ENCODE measurements at regions of chr10 and their contacts with region 1.

Region 1: DNA sequence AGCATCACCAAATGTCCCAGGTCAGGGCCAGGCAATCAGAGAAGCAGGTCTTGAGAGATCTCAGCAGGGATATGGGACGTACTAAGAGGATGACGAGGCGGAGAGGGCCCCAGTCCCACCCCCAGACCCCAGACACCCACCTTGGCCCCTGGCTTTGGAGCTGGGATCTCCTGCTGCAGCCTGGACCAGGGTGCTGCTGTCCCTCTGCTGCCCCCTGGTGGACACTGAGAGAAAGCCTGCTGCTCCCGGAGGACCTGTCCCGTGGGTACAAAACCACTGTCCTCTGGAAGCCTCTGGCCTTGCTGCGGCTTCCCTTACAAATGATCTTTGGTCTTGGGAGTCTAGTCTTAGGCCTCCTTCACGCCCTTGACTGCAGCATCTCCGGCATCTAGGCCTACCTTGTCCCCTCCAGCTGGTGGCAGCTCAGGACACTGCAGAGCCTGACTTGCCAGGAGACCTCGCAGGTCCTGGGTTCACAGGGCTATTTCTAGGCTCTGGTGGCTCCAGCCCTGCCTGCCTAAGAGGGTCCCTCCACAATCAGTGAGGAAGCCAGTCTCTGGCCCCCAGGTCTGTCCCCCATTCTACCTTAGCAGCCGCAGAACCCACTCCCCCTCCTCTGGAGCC is 97.1 kb downstream of the RGS10 start:
- DNase-seq: no peak
- ATAC-seq: peak; percentile 89
- H3K4me3 ChIP-seq: no peak overlapping the region
- H3K27ac ChIP-seq: no peak overlapping the region
- H3K4me1 ChIP-seq: peaks cover 14% of the 10 kb centered on the region
- H3K27me3 ChIP-seq: no peaks in the 10 kb centered on the region
- CTCF ChIP-seq: peak; percentile 86 to 92 (median 89)
- EP300 ChIP-seq: no peak
- POLR2A ChIP-seq: no peak
- RAD21 ChIP-seq: peak; percentile 78

Region 2: GRCh38 chr10:119457966-119458766 is 12.7 kb after region 1 on chr10:
- CTCF ChIA-PET with region 1: interaction called, 11 read pairs
- POLR2A ChIA-PET with region 1: interaction called, 3 read pairs
- RAD21 ChIA-PET with region 1: no interaction called
- SMC1A ChIA-PET with region 1: interaction called, 3 read pairs
- in situ Hi-C with region 1: no loop called
- intact Hi-C with region 1: no loop called
- DNase-seq: no peak
- ATAC-seq: no peak
- H3K4me3 ChIP-seq: no peak overlapping the region
- H3K27ac ChIP-seq: no peak overlapping the region
- H3K4me1 ChIP-seq: peaks cover 31% of the 10 kb centered on the region
- H3K27me3 ChIP-seq: no peaks in the 10 kb centered on the region
- CTCF ChIP-seq: no peak
- EP300 ChIP-seq: no peak
- POLR2A ChIP-seq: no peak
- RAD21 ChIP-seq: no peak